Activated CD4-positive, alpha-beta T cell treated with anti-CD3 and anti-CD28 coated beads for 36 hours (primary cell): ENCODE measurements at regions of chr20 and their contacts with region 1.

Region 1: DNA sequence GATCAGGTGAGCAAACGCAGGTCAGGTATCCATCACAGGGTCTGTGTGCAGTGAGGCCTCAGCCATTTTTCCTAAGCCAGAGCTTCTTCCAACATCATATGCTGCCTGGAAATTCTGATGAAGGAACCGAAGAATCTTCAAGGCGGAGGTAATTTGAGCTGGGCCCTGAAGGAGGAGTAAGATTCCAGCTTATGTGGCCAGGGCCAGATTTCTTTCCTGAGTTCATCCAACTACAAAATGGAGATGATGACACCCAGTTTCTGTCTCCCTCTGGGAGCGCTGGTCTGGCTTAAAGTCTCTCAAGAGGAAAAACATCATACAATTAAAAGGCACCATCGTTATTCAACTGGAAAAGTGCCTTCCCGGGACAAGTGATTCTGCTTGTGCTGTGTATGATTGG is 6.9 kb upstream of the MANBAL start:
- DNase-seq: no peak
- ATAC-seq: no peak
- H3K4me3 Mint-ChIP-seq: no peak overlapping the region
- H3K27ac Mint-ChIP-seq: no peak overlapping the region
- H3K4me1 Mint-ChIP-seq: no peaks in the 10 kb centered on the region
- H3K27me3 Mint-ChIP-seq: peaks cover 4% of the 10 kb centered on the region

Region 2: DNA sequence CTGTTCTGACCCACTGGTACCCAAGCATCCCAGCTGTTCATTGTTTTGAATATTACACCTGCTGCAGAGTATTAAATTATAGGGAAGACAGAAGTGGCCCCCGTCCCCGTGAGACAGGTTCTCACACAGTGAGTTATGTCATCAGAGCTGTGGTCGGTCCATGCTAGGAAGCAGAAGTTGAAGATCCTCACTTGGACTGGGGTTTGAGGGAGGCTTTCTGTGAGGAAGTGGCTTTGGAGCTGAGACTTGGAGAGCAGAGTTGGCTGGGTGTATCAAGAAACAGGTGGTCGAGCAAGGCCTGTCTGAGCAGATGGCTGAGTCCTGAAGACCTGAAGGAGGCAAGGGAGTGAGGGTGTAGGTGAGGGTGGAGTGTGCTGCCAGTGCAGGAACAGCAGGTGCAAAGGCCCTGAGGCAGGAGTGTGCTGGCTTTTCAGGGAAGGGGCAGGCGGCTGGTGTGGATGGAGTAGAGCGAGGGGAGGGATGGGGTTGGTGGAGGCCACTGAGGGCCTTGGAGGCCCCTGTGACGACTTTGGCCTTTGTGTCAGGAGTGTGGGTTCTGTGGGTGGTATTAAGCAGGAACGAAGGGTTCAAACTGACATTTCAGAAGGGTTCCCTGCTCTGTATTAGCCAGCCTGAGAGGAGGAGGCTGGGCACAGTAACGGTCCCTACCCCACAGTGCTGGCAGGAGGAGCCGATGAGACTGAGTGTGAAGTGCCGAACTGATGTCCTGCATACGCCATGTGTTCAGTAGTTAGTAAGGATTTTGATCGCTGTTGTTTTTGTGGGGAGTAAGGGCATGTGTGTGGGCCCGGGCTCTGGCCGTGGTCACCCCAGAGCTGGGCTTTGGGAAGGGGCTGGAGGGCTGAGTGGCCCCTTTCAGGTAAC is 75.2 kb after region 1 on chr20:
- CTCF ChIA-PET with region 1: no interaction called
- POLR2A ChIA-PET with region 1: no interaction called
- intact Hi-C with region 1: loop called in 1 of 2 experiments (anchors 2 kb)
- DNase-seq: no peak
- ATAC-seq: no peak
- H3K4me3 Mint-ChIP-seq: no peak overlapping the region
- H3K27ac Mint-ChIP-seq: no peak overlapping the region
- H3K4me1 Mint-ChIP-seq: no peaks in the 10 kb centered on the region
- H3K27me3 Mint-ChIP-seq: no peaks in the 10 kb centered on the region

Region 3: DNA sequence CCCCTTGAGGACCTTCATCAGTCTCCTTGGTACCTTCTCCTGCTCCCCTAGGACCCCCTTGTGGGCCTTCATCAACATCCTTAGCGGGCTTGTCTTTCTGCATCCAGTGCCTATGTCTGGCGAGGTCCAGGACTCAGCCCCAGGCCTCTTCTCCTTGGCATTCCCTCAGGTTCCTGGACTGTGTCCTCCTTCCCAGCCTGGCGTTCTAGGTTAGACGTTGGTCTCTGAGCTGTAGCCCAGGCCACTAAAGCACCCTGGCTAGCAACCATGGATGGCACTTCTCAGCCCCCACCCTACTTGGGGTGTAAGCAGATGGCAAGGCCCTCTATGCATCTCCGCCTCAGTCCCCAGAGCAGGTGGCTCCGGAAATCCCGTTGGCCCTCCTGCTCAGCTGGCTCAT is 187.0 kb after region 1 on chr20:
- CTCF ChIA-PET with region 1: no interaction called
- POLR2A ChIA-PET with region 1: no interaction called
- intact Hi-C with region 1: no loop called
- DNase-seq: no peak
- ATAC-seq: no peak
- H3K4me3 Mint-ChIP-seq: no peak overlapping the region
- H3K27ac Mint-ChIP-seq: no peak overlapping the region
- H3K4me1 Mint-ChIP-seq: no peaks in the 10 kb centered on the region
- H3K27me3 Mint-ChIP-seq: peaks cover 14% of the 10 kb centered on the region

Region 4: DNA sequence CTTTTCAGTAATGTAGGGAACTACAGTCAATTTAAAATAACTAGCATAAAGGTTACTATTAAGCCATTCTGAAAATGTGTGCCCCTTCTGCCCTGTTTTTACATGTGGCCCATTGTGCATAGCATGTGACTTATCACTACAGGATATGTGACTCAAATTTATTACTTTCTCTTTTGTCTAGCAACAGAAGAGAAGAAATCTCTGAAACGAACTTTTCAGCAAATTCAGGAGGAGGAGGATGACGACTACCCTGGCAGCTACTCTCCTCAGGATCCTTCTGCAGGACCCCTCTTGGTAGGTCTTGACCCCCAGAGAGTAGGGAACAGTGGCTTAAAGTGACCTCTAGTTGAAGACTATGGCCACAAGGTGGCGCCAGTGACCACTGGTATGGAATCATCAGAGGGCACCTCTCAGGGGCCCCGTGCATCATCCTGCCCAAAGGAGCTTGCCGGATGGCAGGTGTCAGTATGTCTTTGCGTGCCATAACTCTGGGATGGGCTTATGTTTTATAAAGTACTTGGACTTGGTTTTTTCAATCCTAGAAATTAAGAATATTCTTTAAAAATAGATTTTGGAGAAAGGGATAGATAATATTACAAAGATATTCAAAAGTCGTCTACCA is 774.9 kb after region 1 on chr20:
- CTCF ChIA-PET with region 1: no interaction called
- POLR2A ChIA-PET with region 1: no interaction called
- intact Hi-C with region 1: no loop called
- DNase-seq: peak; percentile 87
- ATAC-seq: peak; percentile 92
- H3K4me3 Mint-ChIP-seq: peak overlapping the region; percentile 29
- H3K27ac Mint-ChIP-seq: peak overlapping the region; percentile 86
- H3K4me1 Mint-ChIP-seq: peaks cover 34% of the 10 kb centered on the region
- H3K27me3 Mint-ChIP-seq: no peaks in the 10 kb centered on the region